Posterior cingulate gyrus (tissue), 11 donors: ENCODE measurements at regions of chr20 and their contacts with region 1.

Region 1: DNA sequence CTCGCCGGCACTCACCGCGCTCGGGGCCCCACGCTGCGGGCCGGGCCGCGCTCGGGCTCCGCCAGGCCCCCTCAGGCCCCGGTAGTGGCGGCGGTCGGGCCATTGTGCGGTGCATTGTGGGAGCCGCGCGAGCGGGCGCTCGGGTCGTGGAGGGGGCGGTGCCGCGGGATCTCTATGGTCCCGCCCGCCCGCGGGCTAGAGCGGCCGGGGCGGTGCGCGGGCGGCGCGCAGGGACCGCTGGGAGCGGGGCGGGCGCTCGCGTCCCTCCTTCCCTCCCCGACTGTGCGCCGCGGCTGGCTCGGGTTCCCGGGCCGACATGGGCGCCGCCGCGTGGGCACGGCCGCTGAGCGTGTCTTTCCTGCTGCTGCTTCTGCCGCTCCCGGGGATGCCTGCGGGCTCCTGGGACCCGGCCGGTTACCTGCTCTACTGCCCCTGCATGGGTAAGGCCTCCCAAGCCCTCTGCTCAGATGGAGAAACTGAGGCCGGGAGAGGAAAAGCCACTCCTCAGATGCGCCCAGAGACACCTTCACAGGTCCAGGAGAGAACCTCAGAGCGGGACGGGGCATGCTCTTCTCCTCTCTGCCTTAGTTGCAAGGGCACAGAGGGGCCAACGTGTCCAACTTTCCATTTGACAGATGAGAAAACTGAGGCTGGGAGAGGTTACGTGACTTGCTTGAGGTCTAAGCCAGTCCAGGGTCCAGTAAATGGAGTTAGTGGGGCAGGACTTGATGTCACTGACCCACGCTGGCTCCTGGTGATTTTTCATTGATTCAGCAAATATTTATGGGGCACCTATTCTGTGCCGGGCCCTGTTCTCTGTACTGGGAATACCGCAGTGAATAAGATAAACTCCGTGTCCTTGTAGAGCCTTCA is at the starts of genes PLAGL2 and POFUT1:
- DNase-seq: peak; percentile 85 to 98 (median 88)

Region 2: DNA sequence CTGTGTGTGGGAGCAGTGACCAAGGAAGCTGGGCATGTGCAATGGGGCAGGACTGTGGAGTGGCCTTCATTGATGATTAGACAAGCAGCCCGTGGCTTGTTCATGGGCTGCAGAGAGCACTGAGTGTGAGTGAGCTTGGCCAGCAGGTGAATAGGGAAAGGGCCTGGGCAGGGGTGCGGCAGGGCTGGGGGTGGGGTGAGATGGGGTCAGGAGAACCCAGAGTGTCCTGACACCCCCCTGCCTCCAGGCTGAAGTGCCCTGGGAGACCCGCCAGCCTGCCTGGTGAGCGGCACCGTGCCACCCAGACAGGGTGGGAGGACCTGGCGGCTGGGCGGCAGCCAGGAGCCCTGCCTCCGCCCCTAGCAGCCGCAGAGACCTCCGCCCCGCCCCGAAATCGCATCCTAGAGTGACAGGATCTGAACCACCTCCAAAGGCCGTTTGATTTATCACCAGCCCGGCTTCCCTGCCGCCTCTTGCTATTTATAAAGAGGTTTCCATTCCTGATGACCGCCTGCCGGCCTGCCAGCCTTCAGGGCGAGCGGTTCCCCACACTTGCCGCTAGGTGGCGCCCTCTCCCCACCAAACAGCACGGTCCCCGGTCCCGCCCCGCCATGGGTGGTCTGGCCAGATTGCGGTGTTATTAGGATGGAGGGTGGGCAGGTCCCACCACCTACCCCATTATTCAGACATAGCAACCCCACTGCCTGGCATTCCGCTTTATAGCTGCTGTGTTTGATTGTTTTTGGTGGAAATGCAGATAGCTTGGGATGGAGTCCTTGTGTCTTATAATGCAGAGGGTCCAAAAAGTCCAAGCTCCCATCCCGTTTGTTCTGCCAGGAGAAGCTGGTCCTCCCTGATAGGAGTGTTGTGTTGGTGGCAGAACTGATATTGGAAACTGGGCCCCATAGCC is 385.2 kb before region 1 on chr20:
- intact Hi-C with region 1: loop called (anchors 10 kb)
- DNase-seq: peak; percentile 46 to 96 (median 78)

Region 3: GRCh38 chr20:32098786-32099185 is 109.1 kb before region 1 on chr20:
- intact Hi-C with region 1: no loop called
- DNase-seq: no peak

Region 4: GRCh38 chr20:32109392-32110172 is 98.3 kb before region 1 on chr20 and contains the start of gene TM9SF4:
- intact Hi-C with region 1: loop called (anchors 1 kb)
- DNase-seq: peak; percentile 84 to 98 (median 94)

Region 5: GRCh38 chr20:32277361-32278198 is 69.7 kb after region 1 on chr20 and contains the start of gene KIF3B:
- intact Hi-C with region 1: loop called (anchors 1 kb)
- DNase-seq: peak; percentile 85 to 98 (median 90)

Region 6: GRCh38 chr20:32357869-32358631 is 150.2 kb after region 1 on chr20 and contains the start of gene ASXL1:
- intact Hi-C with region 1: loop called (anchors 5 kb)
- DNase-seq: peak; percentile 95 to 100 (median 96)

Region 7: GRCh38 chr20:32484958-32485769 is 277.3 kb after region 1 on chr20:
- intact Hi-C with region 1: loop called (anchors 10 kb)
- DNase-seq: peak; percentile 72 to 96 (median 86)